ENCODE measurements at regions of chr19 and their contacts with region 1.

Region 1: GRCh38 chr19:40908976-40909375 is 26.9 kb upstream of the CYP2A7 start:
- DNase-seq: no peak
- ATAC-seq: no peak
- H3K4me3 Mint-ChIP-seq: no peak overlapping the region
- H3K27ac Mint-ChIP-seq: no peak overlapping the region
- H3K4me1 Mint-ChIP-seq: peaks cover 5% of the 10 kb centered on the region
- H3K27me3 Mint-ChIP-seq: peaks cover 54% of the 10 kb centered on the region
- CTCF ChIP-seq: no peak

Region 2: GRCh38 chr19:40640744-40641143 is 268.2 kb before region 1 on chr19:
- CTCF ChIA-PET with region 1: no interaction called
- POLR2A ChIA-PET with region 1: no interaction called
- intact Hi-C with region 1: no loop called
- DNase-seq: no peak
- ATAC-seq: peak; percentile 31
- H3K4me3 Mint-ChIP-seq: no peak overlapping the region
- H3K27ac Mint-ChIP-seq: no peak overlapping the region
- H3K4me1 Mint-ChIP-seq: peaks cover 13% of the 10 kb centered on the region
- H3K27me3 Mint-ChIP-seq: peaks cover 4% of the 10 kb centered on the region
- CTCF ChIP-seq: no peak

Region 3: GRCh38 chr19:40921005-40921897 is 12.3 kb after region 1 on chr19:
- CTCF ChIA-PET with region 1: no interaction called
- POLR2A ChIA-PET with region 1: no interaction called
- intact Hi-C with region 1: no loop called
- DNase-seq: no peak
- ATAC-seq: no peak
- H3K4me3 Mint-ChIP-seq: no peak overlapping the region
- H3K27ac Mint-ChIP-seq: no peak overlapping the region
- H3K4me1 Mint-ChIP-seq: no peaks in the 10 kb centered on the region
- H3K27me3 Mint-ChIP-seq: peaks cover 9% of the 10 kb centered on the region
- CTCF ChIP-seq: no peak

Region 4: GRCh38 chr19:40933034-40933433 is 24.1 kb after region 1 on chr19:
- CTCF ChIA-PET with region 1: no interaction called
- POLR2A ChIA-PET with region 1: no interaction called
- intact Hi-C with region 1: no loop called
- DNase-seq: no peak
- ATAC-seq: no peak
- H3K4me3 Mint-ChIP-seq: no peak overlapping the region
- H3K27ac Mint-ChIP-seq: no peak overlapping the region
- H3K4me1 Mint-ChIP-seq: no peaks in the 10 kb centered on the region
- H3K27me3 Mint-ChIP-seq: peaks cover 46% of the 10 kb centered on the region
- CTCF ChIP-seq: no peak

Region 5: DNA sequence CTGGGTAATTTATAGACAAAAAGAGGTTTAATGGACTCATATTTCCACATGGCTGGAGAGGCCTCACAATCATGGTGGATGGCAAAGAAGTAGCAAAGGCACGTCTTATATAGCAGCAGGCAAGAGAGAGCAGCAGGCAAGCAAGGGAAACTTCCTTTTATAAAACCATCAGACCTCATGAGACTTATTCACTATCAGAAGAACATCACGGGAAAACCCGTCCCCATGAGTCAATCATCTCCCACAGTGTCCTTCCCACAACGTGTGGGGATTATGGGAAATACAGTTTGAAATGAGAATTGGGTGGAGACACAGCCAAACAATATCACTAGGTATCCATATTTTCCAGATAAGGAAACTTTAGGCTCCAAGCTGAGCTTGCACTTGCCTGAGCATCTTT is 72.6 kb after region 1 on chr19:
- CTCF ChIA-PET with region 1: no interaction called
- POLR2A ChIA-PET with region 1: no interaction called
- intact Hi-C with region 1: loop called (anchors 2 kb)
- DNase-seq: no peak
- ATAC-seq: no peak
- H3K4me3 Mint-ChIP-seq: no peak overlapping the region
- H3K27ac Mint-ChIP-seq: no peak overlapping the region
- H3K4me1 Mint-ChIP-seq: no peaks in the 10 kb centered on the region
- H3K27me3 Mint-ChIP-seq: peaks cover 26% of the 10 kb centered on the region
- CTCF ChIP-seq: no peak

Region 6: GRCh38 chr19:41050434-41050833 is 141.5 kb after region 1 on chr19:
- CTCF ChIA-PET with region 1: no interaction called
- POLR2A ChIA-PET with region 1: no interaction called
- intact Hi-C with region 1: no loop called
- DNase-seq: no peak
- ATAC-seq: no peak
- H3K4me3 Mint-ChIP-seq: no peak overlapping the region
- H3K27ac Mint-ChIP-seq: no peak overlapping the region
- H3K4me1 Mint-ChIP-seq: no peaks in the 10 kb centered on the region
- H3K27me3 Mint-ChIP-seq: peaks cover 23% of the 10 kb centered on the region
- CTCF ChIP-seq: no peak

Measured in activated B cell treated with CpG ODN at 0.5 μM for 24 hours (primary cell).